HepG2 (cell line): ENCODE measurements at regions of chr1 and their contacts with region 1.

Region 1: GRCh38 chr1:112369392-112370285 is 26.4 kb upstream of the CTTNBP2NL start:
- DNase-seq: peak; percentile 65
- ATAC-seq: peak; percentile 100
- H3K4me3 ChIP-seq: no peak overlapping the region
- H3K27ac ChIP-seq: no peak overlapping the region
- H3K4me1 ChIP-seq: no peaks in the 10 kb centered on the region
- H3K27me3 ChIP-seq: peaks cover 0 to 11% of the 10 kb centered on the region in 2 experiments; a peak in 1 of 5 replicates
- CTCF ChIP-seq: peak; percentile 98
- EP300 ChIP-seq: no peak
- POLR2A ChIP-seq: no peak
- RAD21 ChIP-seq: peak; percentile 85

Region 2: DNA sequence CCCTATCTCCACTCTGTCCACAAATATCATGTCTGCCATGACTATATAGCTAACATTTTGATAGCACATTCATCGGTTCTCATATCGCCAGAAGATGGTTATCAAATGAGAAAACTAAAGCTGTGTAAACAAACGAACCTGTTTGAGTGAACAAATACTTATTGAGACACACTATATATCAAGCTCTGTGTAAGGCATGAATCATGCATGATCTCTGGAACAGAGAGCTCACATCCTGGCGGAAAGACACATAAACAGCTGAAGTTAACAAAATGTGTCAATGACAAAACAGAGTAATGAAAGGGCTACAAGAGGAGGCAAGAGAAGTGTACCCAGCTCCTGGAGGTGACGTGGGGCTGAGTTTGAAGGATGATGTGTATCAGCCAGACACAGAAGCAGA is 393.3 kb before region 1 on chr1:
- CTCF ChIA-PET with region 1: no interaction called
- POLR2A ChIA-PET with region 1: no interaction called
- in situ Hi-C with region 1: no loop called
- intact Hi-C with region 1: no loop called
- DNase-seq: peak; percentile 39
- ATAC-seq: peak; percentile 72
- H3K4me3 ChIP-seq: no peak overlapping the region
- H3K27ac ChIP-seq: no peak overlapping the region
- H3K4me1 ChIP-seq: peaks cover 41% of the 10 kb centered on the region
- H3K27me3 ChIP-seq: peaks cover 0 to 12% of the 10 kb centered on the region in 2 experiments; a peak in 1 of 5 replicates
- CTCF ChIP-seq: no peak
- EP300 ChIP-seq: no peak
- POLR2A ChIP-seq: no peak
- RAD21 ChIP-seq: no peak

Region 3: GRCh38 chr1:112092656-112093371 is 276.8 kb before region 1 on chr1:
- CTCF ChIA-PET with region 1: no interaction called
- POLR2A ChIA-PET with region 1: no interaction called
- in situ Hi-C with region 1: no loop called
- intact Hi-C with region 1: no loop called
- DNase-seq: no peak
- ATAC-seq: no peak
- H3K4me3 ChIP-seq: no peak overlapping the region
- H3K27ac ChIP-seq: no peak overlapping the region
- H3K4me1 ChIP-seq: no peaks in the 10 kb centered on the region
- H3K27me3 ChIP-seq: 0 out of 5 replicates have a peak, but pooled peaks cover 0 to 1% of the 10 kb centered on the region in 2 experiments
- CTCF ChIP-seq: no peak
- EP300 ChIP-seq: no peak
- POLR2A ChIP-seq: no peak
- RAD21 ChIP-seq: no peak

Region 4: DNA sequence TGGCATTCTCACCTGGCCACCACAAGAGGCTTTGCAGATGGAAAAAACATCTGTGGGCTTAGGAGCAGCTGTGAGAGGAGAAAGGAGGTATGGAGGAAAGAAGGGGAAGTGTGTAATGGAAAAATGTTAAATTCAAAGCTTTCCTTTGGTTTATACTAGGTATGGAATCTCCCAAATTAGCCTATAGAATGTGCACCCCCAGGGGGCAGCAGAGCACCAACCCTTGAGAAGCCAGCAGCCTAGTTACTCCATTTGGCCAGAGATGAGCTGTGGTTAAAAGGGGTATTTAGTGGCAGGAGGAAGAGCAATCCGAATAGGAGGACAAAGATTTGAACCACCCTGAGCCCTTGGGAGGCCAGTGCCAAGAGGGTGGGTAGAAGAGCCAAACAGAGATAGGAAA is 71.1 kb before region 1 on chr1:
- CTCF ChIA-PET with region 1: interaction called, 10 read pairs
- POLR2A ChIA-PET with region 1: no interaction called
- in situ Hi-C with region 1: no loop called
- intact Hi-C with region 1: no loop called
- DNase-seq: peak; percentile 38
- ATAC-seq: peak; percentile 83
- H3K4me3 ChIP-seq: no peak overlapping the region
- H3K27ac ChIP-seq: no peak overlapping the region
- H3K4me1 ChIP-seq: no peaks in the 10 kb centered on the region
- H3K27me3 ChIP-seq: no peaks in the 10 kb centered on the region; a peak in 1 of 5 replicates
- CTCF ChIP-seq: peak; percentile 49
- EP300 ChIP-seq: no peak
- POLR2A ChIP-seq: no peak
- RAD21 ChIP-seq: no peak

Region 5: GRCh38 chr1:112358798-112359408 is 10.7 kb before region 1 on chr1:
- CTCF ChIA-PET with region 1: interaction called, 22 read pairs
- POLR2A ChIA-PET with region 1: no interaction called
- in situ Hi-C with region 1: no loop called
- intact Hi-C with region 1: loop called (anchors 1 kb)
- DNase-seq: peak; percentile 30
- ATAC-seq: peak; percentile 97
- H3K4me3 ChIP-seq: no peak overlapping the region
- H3K27ac ChIP-seq: no peak overlapping the region
- H3K4me1 ChIP-seq: peaks cover 16% of the 10 kb centered on the region
- H3K27me3 ChIP-seq: no peaks in the 10 kb centered on the region; a peak in 1 of 5 replicates
- CTCF ChIP-seq: peak; percentile 87
- EP300 ChIP-seq: no peak
- POLR2A ChIP-seq: no peak
- RAD21 ChIP-seq: peak; percentile 18; the same call in 1 of the 2 replicates